B cell (primary cell): ENCODE measurements at regions of chr15 and their contacts with region 1.

Region 1: DNA sequence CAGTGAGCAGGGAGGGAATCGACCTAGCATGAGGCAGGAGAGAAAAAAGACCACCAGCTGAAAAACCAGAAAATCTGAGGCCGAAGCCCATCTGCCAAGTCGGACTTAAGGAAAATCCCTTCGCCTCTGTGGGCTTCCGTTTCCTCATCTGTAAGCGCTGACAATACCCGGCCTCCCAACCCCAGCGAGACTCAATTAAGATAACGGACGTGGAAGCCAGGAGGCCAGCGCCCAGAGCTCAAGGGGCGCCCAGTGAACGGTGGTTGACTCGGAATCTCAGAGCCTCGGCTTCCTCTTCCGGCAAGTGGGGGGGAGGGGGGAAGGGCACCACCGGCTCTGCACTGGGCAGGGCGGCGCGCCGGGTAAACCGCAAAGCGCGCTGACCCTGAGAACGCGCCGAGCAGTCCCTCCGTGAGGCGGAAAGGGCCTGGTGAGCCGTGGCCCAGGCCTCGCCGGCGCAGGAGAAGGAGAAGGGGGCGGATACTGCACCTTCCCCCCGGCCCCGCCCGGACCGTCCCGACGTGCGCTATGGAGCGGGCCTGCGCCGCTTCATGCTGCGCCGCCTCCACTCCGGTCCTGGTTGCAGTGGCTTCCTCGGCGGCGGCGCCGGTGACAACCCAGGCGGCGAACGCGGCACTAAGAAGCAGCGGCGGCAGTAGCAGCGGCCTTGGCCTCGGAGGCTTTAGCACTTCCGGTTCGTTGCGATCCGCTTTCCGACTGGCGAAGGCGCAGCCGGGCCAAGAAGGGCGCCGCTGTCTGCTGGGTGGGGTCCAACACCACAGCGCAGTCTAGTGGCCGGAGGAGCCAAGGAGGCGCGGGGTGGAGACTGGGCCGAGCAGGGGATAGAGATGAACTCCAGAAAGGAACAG is at the start of gene DPP8:
- DNase-seq: peak; percentile 95
- ATAC-seq: peak; percentile 94
- H3K4me3 ChIP-seq: peak within 1 kb of the TSS; percentile 87 to 99 (median 92)
- H3K4me3 Mint-ChIP-seq: peak within 1 kb of the TSS; percentile 95
- H3K27ac ChIP-seq: peak within 1 kb of the TSS; percentile 77 to 89
- H3K27ac Mint-ChIP-seq: peak within 1 kb of the TSS; percentile 89
- H3K4me1 ChIP-seq: peaks cover 14 to 15% of the 10 kb centered on the region in 2 donors
- H3K4me1 Mint-ChIP-seq: peaks cover 34% of the 10 kb centered on the region
- H3K27me3 ChIP-seq: no peaks in the 10 kb centered on the region
- H3K27me3 Mint-ChIP-seq: no peaks in the 10 kb centered on the region
- CTCF ChIP-seq: peak; percentile 90
- total RNA-seq, gene DPP8: 65.2 and 73.7 TPM in 2 replicates

Region 2: DNA sequence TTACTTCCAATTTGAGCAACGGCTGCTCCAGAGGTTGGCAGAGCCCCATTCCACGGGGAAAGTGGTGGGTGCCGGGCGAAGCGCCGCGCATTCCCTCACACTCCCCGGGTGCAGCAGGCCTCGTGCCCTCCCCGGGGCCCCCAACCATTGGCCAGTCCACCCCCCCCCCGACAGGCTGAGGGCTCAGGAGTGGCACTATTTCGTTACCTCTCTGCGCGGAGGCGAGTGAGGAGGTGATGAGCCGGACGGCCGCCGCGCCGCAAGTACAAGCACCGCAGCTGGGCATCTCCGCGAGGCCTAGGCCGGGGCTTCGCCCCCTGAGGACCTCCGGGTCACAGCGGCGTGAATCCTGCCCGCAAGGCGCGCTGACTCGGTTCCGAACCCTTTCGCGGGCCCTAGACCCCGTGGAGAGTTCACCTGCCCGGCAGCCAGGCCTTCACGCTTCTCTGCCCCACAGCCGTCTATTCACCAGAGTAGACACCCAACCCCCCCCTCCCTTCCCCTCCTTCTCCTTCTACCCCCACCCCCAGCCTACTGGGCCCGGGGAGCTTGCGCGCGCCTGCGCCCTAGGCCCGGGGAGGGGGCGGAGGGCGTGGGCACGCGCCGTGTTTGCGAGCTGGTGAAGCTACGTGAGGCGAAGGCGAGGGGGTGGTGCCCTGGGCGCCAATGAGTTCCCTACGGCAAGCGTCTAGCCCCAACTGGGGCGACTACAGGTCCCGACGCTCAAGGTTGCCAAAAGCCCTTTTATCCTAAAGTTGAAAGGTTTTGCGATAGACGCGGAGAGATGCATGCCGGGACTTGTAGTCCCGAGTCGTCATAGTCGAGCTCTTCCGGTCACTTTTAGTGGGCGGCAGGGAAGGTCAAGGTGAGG is 332.1 kb before region 1 on chr15 and contains the start of gene CLPX:
- CTCF ChIA-PET with region 1: no interaction called
- POLR2A ChIA-PET with region 1: no interaction called
- intact Hi-C with region 1: loop called (anchors 1 kb)
- DNase-seq: peak; percentile 96
- ATAC-seq: peak; percentile 89
- H3K4me3 ChIP-seq: peak within 1 kb of the TSS; percentile 58 to 94 (median 88)
- H3K4me3 Mint-ChIP-seq: peak within 1 kb of the TSS; percentile 96
- H3K27ac ChIP-seq: peak within 1 kb of the TSS; percentile 74 to 88
- H3K27ac Mint-ChIP-seq: peak within 1 kb of the TSS; percentile 97
- H3K4me1 ChIP-seq: peaks cover 17 to 20% of the 10 kb centered on the region in 2 donors
- H3K4me1 Mint-ChIP-seq: peaks cover 26% of the 10 kb centered on the region
- H3K27me3 ChIP-seq: no peaks in the 10 kb centered on the region
- H3K27me3 Mint-ChIP-seq: no peaks in the 10 kb centered on the region
- CTCF ChIP-seq: no peak
- total RNA-seq, gene CLPX: 54.5 and 63.1 TPM in 2 replicates

Region 3: GRCh38 chr15:65530314-65531122 is 13.3 kb after region 1 on chr15 and contains the start of gene HACD3:
- CTCF ChIA-PET with region 1: no interaction called
- POLR2A ChIA-PET with region 1: interaction called, 16 read pairs
- intact Hi-C with region 1: no loop called
- DNase-seq: peak; percentile 91
- ATAC-seq: peak; percentile 97
- H3K4me3 ChIP-seq: peak within 1 kb of the TSS; percentile 63 to 91 (median 82)
- H3K4me3 Mint-ChIP-seq: peak within 1 kb of the TSS; percentile 96
- H3K27ac ChIP-seq: peak within 1 kb of the TSS; percentile 44 to 59
- H3K27ac Mint-ChIP-seq: peak within 1 kb of the TSS; percentile 87
- H3K4me1 ChIP-seq: peaks cover 3 to 7% of the 10 kb centered on the region in 2 donors
- H3K4me1 Mint-ChIP-seq: peaks cover 21% of the 10 kb centered on the region
- H3K27me3 ChIP-seq: no peaks in the 10 kb centered on the region
- H3K27me3 Mint-ChIP-seq: no peaks in the 10 kb centered on the region
- CTCF ChIP-seq: no peak
- total RNA-seq, gene HACD3: 18.8 and 19.3 TPM in 2 replicates

Region 4: DNA sequence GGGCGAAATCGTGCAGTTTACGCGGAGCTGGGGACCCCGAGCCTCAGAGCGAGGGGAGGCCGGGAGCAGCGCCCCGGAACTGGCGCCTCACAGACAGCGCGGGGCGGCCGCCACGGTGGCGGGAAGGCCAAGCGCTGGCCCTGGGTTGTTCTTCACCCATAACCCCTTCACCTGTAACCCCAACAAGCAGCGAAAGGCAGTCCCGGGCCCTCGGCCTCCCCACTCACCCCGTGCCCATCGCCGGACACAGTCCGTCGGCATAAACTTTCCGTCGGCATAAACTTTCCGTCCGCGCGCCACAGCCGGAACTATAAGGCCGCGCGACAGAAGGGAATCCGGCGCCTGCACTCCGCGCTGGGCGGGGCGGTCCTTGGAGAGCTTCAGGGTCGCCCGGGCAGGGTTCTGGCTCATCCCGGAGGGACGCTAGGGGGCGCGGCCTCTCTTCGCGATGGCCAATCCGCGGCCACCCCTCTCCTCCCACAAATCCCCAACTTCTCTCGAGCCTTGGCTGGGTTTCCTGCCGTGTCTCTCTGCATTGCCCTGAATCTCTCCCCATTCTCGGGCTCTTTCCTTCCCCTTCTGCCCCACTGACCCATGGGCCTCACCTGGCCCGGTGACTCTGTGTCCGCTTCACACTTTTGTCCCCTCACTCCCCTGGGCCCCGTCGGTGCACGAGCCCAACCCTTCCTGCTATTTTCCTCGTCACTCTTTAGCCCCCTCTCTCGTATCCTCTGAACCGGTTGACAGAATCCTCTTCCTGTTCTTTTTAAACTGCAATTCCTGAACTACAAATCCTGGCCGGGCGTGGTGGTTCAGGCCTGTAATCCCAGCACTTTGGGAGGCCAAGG is 93.9 kb after region 1 on chr15 and contains the start of gene INTS14:
- CTCF ChIA-PET with region 1: no interaction called
- POLR2A ChIA-PET with region 1: no interaction called
- intact Hi-C with region 1: loop called (anchors 1 kb)
- DNase-seq: peak; percentile 93
- ATAC-seq: peak; percentile 97
- H3K4me3 ChIP-seq: peak within 1 kb of the TSS; percentile 61 to 90 (median 85)
- H3K4me3 Mint-ChIP-seq: peak within 1 kb of the TSS; percentile 99
- H3K27ac ChIP-seq: peak within 1 kb of the TSS; percentile 78 to 95
- H3K27ac Mint-ChIP-seq: peak within 1 kb of the TSS; percentile 98
- H3K4me1 ChIP-seq: peaks cover 17 to 21% of the 10 kb centered on the region in 2 donors
- H3K4me1 Mint-ChIP-seq: peaks cover 38% of the 10 kb centered on the region
- H3K27me3 ChIP-seq: no peaks in the 10 kb centered on the region
- H3K27me3 Mint-ChIP-seq: no peaks in the 10 kb centered on the region
- CTCF ChIP-seq: peak; percentile 59
- total RNA-seq, gene INTS14: 37.8 and 39.0 TPM in 2 replicates

Region 5: GRCh38 chr15:65712415-65712814 is 195.2 kb after region 1 on chr15:
- CTCF ChIA-PET with region 1: no interaction called
- POLR2A ChIA-PET with region 1: no interaction called
- intact Hi-C with region 1: no loop called
- DNase-seq: no peak
- ATAC-seq: no peak
- H3K4me3 ChIP-seq: no peak overlapping the region
- H3K4me3 Mint-ChIP-seq: no peak overlapping the region
- H3K27ac ChIP-seq: peak overlapping the region in 1 of 2 donors; percentile 12
- H3K27ac Mint-ChIP-seq: no peak overlapping the region
- H3K4me1 ChIP-seq: no peaks in the 10 kb centered on the region
- H3K4me1 Mint-ChIP-seq: peaks cover 2% of the 10 kb centered on the region
- H3K27me3 ChIP-seq: no peaks in the 10 kb centered on the region
- H3K27me3 Mint-ChIP-seq: no peaks in the 10 kb centered on the region
- CTCF ChIP-seq: no peak

Region 6: GRCh38 chr15:66386204-66387123 is 869.2 kb after region 1 on chr15 and contains the start of gene MAP2K1:
- CTCF ChIA-PET with region 1: no interaction called
- POLR2A ChIA-PET with region 1: no interaction called
- intact Hi-C with region 1: loop called (anchors 1 kb)
- DNase-seq: peak; percentile 98
- ATAC-seq: peak; percentile 91
- H3K4me3 ChIP-seq: peak within 1 kb of the TSS; percentile 59 to 78 (median 75)
- H3K4me3 Mint-ChIP-seq: peak within 1 kb of the TSS; percentile 92
- H3K27ac ChIP-seq: peak within 1 kb of the TSS; percentile 61 to 78
- H3K27ac Mint-ChIP-seq: peak within 1 kb of the TSS; percentile 94
- H3K4me1 ChIP-seq: peaks cover 47 to 50% of the 10 kb centered on the region in 2 donors
- H3K4me1 Mint-ChIP-seq: peaks cover 46% of the 10 kb centered on the region
- H3K27me3 ChIP-seq: no peaks in the 10 kb centered on the region
- H3K27me3 Mint-ChIP-seq: no peaks in the 10 kb centered on the region
- CTCF ChIP-seq: peak; percentile 80
- total RNA-seq, gene MAP2K1: 50.3 and 52.3 TPM in 2 replicates